Breast epithelium (tissue), 4 donors: ENCODE measurements at regions of chr5 and their contacts with region 1.

Region 1: GRCh38 chr5:157858527-157859226 is at the start of gene CLINT1:
- DNase-seq: peak; percentile 80 to 85
- H3K4me3 ChIP-seq: peak within 1 kb of the TSS; percentile 96 to 97 (median 97)
- H3K27ac ChIP-seq: peak within 1 kb of the TSS; percentile 94 to 96
- H3K4me1 ChIP-seq: peaks cover 0 to 5% of the 10 kb centered on the region in 2 donors
- H3K27me3 ChIP-seq: no peaks in the 10 kb centered on the region
- CTCF ChIP-seq: no peak
- POLR2A ChIP-seq: peak; percentile 44
- total RNA-seq, gene CLINT1: 86.5 to 157 (median 89.5) TPM

Region 2: GRCh38 chr5:157342822-157343402 is 515.8 kb before region 1 on chr5:
- intact Hi-C with region 1: loop called (anchors 5 kb)
- DNase-seq: no peak
- H3K4me3 ChIP-seq: no peak overlapping the region
- H3K27ac ChIP-seq: no peak overlapping the region
- H3K4me1 ChIP-seq: no peaks in the 10 kb centered on the region
- H3K27me3 ChIP-seq: no peaks in the 10 kb centered on the region
- CTCF ChIP-seq: peak in 1 of 3 donors; percentile 29
- POLR2A ChIP-seq: no peak